CD8-positive, alpha-beta T cell (primary cell): ENCODE measurements at regions of chr1 and their contacts with region 1.

Region 1: GRCh38 chr1:231091831-231092301 is 51.8 kb upstream of the FAM89A start:
- DNase-seq: peak in 6 of 9 experiments; percentile 7 to 56 (median 44)
- ATAC-seq: no peak
- H3K4me3 ChIP-seq: no peak overlapping the region
- H3K4me3 Mint-ChIP-seq: no peak overlapping the region
- H3K27ac ChIP-seq: no peak overlapping the region
- H3K27ac Mint-ChIP-seq: no peak overlapping the region
- H3K4me1 ChIP-seq: no peaks in the 10 kb centered on the region
- H3K4me1 Mint-ChIP-seq: no peaks in the 10 kb centered on the region
- H3K27me3 ChIP-seq: peaks cover 0 to 5% of the 10 kb centered on the region in 2 experiments
- H3K27me3 Mint-ChIP-seq: peaks cover 22% of the 10 kb centered on the region
- CTCF ChIP-seq: peak; percentile 58

Region 2: DNA sequence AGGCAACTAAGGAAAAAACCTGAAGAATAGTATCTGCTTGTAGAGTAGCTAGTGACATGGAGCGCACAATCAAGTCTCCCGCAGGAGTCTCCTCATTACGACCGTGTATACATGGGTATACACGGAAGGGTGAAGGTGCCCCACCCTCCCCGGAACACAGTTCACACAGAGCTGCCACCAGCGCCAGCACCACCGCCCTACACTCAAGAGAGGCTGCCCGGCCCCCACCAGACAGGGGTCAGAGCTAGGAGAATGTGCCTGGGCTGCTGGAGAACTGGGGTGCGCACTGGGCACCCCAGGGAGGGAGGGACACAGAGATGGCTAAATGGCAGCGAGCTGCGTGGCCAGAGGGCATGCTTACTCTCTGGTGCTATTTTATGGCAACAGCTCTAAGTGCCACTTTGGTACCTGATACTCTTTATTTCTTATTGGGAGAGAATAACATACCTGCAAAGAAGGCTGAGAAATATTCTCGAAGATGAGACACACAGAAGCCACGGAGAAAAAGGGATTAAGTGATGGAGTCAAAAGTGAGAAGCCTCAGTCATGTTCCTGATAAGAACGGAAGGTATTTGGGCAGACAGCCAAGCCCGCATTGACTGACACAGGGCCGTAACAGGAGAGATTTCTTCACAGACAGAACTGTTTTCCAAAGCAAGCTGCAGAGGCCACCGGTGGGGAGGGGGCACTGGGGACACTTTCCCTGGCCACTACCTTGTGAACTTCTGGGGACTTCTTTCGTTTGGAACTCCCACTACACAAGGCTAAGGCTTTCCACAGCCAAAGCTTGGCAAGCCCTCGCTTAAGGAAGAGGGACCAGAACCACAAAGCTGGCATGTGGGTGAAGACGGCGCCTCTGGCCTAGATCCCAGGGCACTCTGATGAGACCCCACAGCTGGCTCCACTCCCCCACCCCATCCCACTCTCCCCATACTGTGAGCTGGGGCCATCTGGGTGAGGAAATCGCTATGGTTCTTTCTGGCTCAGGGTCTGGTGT is 773.7 kb before region 1 on chr1:
- CTCF ChIA-PET with region 1: no interaction called
- POLR2A ChIA-PET with region 1: no interaction called
- intact Hi-C with region 1: no loop called
- DNase-seq: no peak
- ATAC-seq: no peak
- H3K4me3 ChIP-seq: no peak overlapping the region
- H3K4me3 Mint-ChIP-seq: no peak overlapping the region
- H3K27ac ChIP-seq: no peak overlapping the region
- H3K27ac Mint-ChIP-seq: no peak overlapping the region
- H3K4me1 ChIP-seq: no peaks in the 10 kb centered on the region
- H3K4me1 Mint-ChIP-seq: no peaks in the 10 kb centered on the region
- H3K27me3 ChIP-seq: no peaks in the 10 kb centered on the region
- H3K27me3 Mint-ChIP-seq: peaks cover under 1% of the 10 kb centered on the region
- CTCF ChIP-seq: no peak

Region 3: GRCh38 chr1:230728710-230729392 is 363.0 kb before region 1 on chr1:
- CTCF ChIA-PET with region 1: no interaction called
- POLR2A ChIA-PET with region 1: no interaction called
- intact Hi-C with region 1: no loop called
- DNase-seq: no peak
- ATAC-seq: no peak
- H3K4me3 ChIP-seq: no peak overlapping the region
- H3K4me3 Mint-ChIP-seq: no peak overlapping the region
- H3K27ac ChIP-seq: no peak overlapping the region
- H3K27ac Mint-ChIP-seq: no peak overlapping the region
- H3K4me1 ChIP-seq: no peaks in the 10 kb centered on the region
- H3K4me1 Mint-ChIP-seq: no peaks in the 10 kb centered on the region
- H3K27me3 ChIP-seq: no peaks in the 10 kb centered on the region
- H3K27me3 Mint-ChIP-seq: peaks cover 16% of the 10 kb centered on the region
- CTCF ChIP-seq: no peak

Region 4: DNA sequence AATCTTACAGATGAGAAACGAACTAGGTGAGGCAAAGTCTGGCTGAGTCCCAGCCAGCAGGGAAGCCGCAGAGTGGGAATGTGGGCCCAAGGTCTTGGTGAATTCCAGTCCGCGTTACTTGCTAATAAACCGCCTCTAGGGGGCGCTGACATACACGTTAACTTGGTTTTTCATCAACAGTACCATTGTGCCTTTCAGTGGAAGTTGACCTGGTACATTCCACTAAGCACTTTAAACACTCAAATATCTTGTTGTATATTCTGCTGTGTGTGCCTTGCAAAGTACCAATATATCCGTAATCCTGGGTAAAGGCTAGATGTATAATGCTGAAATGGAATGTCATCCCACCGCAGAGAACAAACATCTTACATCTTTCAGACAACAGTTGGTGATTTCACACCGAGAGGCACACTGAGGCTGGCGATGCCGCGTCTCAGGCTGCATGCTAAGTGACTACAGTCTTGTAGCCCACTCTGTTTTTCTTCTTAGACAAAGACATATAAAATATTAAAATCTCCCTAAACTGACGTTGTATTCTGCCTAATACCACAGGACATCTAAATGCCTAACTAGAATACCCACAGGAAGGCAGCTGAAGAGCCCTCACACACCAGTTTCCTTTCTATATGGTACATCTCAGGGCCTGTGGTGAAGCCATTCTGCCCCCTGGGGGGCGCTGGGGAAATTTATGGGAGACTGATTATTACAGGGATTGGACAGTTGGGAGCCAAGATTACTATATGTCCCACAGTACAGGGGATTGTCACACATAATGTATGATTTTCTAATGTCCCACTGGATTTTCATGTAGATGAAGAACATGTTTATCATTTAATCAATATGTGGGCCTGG is 174.4 kb before region 1 on chr1:
- CTCF ChIA-PET with region 1: interaction called, 24 read pairs
- POLR2A ChIA-PET with region 1: no interaction called
- intact Hi-C with region 1: loop called (anchors 1 kb)
- DNase-seq: peak; percentile 41 to 86 (median 80)
- ATAC-seq: peak; percentile 65
- H3K4me3 ChIP-seq: no peak overlapping the region
- H3K4me3 Mint-ChIP-seq: no peak overlapping the region
- H3K27ac ChIP-seq: no peak overlapping the region
- H3K27ac Mint-ChIP-seq: no peak overlapping the region
- H3K4me1 ChIP-seq: no peaks in the 10 kb centered on the region
- H3K4me1 Mint-ChIP-seq: no peaks in the 10 kb centered on the region
- H3K27me3 ChIP-seq: no peaks in the 10 kb centered on the region
- H3K27me3 Mint-ChIP-seq: no peaks in the 10 kb centered on the region
- CTCF ChIP-seq: peak; percentile 84